Dendritic cell treated with granulocyte-macrophage colony-stimulating factor and Interleukin-4, amounts not matched to agents 40 ng/mL and 50 ng/mL, for 4 days (primary cell): ENCODE measurements at regions of chr19 and their contacts with region 1.

Region 1: GRCh38 chr19:46840136-46840942 is 10.3 kb downstream of the AP2S1 start:
- H3K4me3 Mint-ChIP-seq: no peak overlapping the region
- H3K27ac Mint-ChIP-seq: no peak overlapping the region
- H3K4me1 Mint-ChIP-seq: peaks cover 50% of the 10 kb centered on the region
- H3K27me3 Mint-ChIP-seq: no peaks in the 10 kb centered on the region

Region 2: GRCh38 chr19:46753420-46754155 is 86.8 kb before region 1 on chr19:
- intact Hi-C with region 1: loop called (anchors 1 kb)
- H3K4me3 Mint-ChIP-seq: no peak overlapping the region
- H3K27ac Mint-ChIP-seq: no peak overlapping the region
- H3K4me1 Mint-ChIP-seq: peaks cover 52% of the 10 kb centered on the region
- H3K27me3 Mint-ChIP-seq: no peaks in the 10 kb centered on the region

Region 3: DNA sequence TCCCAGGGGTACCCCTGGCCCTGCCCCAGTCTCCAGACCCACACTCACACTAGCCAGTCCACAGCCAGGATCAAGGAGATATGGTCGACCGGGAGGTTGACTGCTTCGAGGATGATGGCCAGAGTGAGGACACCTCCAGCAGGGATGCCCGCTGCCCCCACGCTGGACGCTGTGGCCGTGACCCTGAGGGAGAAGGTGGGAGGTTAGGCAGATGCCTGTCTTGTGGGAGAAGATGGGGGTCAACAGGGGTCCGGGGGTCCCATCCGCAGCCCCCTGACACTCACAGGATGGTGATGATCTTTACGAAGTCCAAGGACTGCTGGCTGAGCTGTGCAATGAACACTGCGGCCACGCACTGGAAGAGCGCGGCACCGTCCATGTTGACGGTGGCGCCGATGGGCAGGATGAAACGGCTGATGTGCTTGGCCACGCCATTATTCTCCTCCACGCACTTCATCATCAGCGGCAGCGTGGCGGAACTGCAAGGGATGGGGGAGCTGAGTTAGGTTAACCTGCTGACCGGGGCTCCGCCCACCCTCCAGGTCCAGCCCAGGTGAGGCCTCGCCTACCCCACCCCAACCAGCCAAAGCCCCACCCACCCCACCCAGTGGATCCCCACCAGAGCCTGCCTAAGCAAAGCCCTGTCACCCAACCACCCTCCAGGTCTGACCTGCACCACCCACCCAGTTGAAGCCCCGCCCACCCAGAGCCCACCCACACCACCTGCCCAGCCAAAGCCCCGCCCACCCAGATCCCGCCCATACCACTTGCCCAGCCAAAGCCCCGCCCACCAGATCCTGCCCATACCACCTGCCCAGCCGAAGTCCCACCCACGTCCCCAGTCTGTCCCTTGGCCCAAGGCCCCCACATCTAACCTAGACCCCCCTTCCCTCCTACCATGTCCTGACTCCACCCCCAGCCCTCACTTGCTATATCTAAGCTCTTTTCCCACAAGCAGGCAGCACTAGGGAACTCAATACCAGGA is 63.1 kb before region 1 on chr19:
- intact Hi-C with region 1: loop called (anchors 1 kb)
- H3K4me3 Mint-ChIP-seq: no peak overlapping the region
- H3K27ac Mint-ChIP-seq: no peak overlapping the region
- H3K4me1 Mint-ChIP-seq: peaks cover 24% of the 10 kb centered on the region
- H3K27me3 Mint-ChIP-seq: no peaks in the 10 kb centered on the region